ENCODE measurements at regions of chr3 and their contacts with region 1.

Region 1: GRCh38 chr3:160544844-160545503 is 20.4 kb downstream of the KPNA4 start:
- DNase-seq: no peak
- ATAC-seq: no peak
- H3K4me3 ChIP-seq: no peak overlapping the region
- H3K27ac ChIP-seq: no peak overlapping the region
- H3K4me1 ChIP-seq: peaks cover 53% of the 10 kb centered on the region
- H3K27me3 ChIP-seq: no peaks in the 10 kb centered on the region
- CTCF ChIP-seq: no peak

Region 2: DNA sequence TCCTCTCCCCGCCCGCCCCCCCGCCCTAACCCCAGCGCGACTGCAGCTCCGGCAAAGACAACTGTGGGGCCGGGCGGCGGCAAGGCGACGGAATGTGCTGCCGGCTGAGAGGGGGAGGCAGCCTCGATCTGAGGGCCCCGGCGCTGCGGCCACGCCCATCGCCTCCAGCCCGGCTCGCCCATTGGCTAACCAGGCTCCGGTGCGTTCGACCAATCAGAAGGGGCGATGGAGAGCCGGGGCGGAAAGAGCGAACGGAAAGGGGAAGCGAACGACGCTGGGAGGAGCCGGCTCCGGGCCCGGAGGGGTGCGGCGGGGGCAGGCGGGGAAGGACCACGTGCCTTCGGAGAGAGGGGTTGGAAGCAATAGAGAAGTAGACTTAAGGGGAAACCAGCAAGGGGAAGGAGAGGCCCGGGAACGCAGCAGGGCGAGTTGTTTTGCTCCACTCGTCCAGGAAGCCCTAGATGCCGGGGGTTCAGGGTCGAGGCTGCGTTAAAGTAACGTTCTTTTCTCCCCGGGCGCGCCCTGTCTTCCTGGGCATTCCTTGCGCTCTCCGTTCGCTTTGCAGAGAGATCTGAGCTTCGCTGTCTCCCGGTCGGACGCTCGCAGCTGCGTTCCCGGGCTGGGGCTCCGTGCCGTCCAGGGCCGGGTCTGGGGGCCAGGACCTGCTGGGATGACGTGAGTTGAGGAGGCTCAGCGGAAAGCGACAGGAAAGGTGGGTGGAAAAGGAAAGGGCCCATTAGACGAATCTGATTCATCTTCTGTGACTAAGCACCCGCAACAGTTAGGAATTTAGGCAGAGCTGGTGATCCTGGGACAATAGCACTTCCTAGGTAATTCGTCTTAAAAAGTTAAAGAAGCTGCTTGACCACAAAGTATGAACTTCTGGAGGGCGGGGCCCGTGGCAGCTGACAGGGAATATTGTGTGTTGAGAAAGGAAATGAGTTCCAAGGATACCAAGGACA is 20.7 kb after region 1 on chr3 and contains the start of gene KPNA4:
- intact Hi-C with region 1: loop called in 1 of 2 experiments (anchors 2 kb)
- DNase-seq: peak; percentile 98 to 99
- ATAC-seq: peak; percentile 95 to 96 (median 96)
- H3K4me3 ChIP-seq: peak within 1 kb of the TSS; percentile 93
- H3K27ac ChIP-seq: peak within 1 kb of the TSS; percentile 99
- H3K4me1 ChIP-seq: peaks cover 54% of the 10 kb centered on the region
- H3K27me3 ChIP-seq: no peaks in the 10 kb centered on the region
- CTCF ChIP-seq: no peak
- total RNA-seq, gene KPNA4: 197 to 236 (median 203) TPM

Region 3: DNA sequence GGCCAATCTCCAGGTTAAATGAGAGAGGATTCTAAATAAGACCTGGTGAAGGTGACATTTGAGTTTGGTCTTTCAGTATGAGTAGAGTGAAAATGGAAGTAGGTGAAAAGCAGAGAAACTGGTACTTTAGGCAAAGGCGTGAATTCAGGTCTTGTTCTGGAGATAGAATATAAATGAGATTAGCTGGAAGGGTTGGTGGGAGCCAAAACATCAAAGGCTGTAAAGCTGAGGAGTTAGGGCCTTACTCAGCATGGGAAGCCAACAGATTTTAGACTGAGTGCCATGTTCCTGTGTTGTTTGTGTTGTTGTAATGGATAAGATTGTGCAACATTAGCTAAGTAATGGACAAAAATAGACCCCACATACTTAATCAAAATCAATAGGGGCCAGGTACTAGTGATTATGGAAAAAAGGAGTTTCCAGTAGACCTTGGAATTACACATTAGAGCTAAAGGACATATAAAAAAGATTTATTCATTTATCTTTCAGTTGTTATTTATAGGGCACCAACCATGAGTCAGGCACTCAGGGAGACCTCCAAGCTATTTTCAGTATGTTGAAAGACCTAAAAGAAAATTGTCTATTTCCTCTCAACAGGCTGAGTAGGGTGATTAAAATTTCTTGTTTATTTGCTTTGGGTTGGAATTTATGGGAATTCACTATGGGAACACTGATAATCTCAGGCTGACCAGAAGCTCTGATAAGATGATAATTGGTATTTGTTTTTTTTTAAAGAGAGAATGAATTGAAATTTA is 152.8 kb after region 1 on chr3:
- intact Hi-C with region 1: no loop called
- DNase-seq: no peak
- ATAC-seq: peak; percentile 54 to 76 (median 66)
- H3K4me3 ChIP-seq: no peak overlapping the region
- H3K27ac ChIP-seq: no peak overlapping the region
- H3K4me1 ChIP-seq: peaks cover 6% of the 10 kb centered on the region
- H3K27me3 ChIP-seq: no peaks in the 10 kb centered on the region
- CTCF ChIP-seq: no peak